B cell (primary cell): ENCODE measurements at regions of chr14 and their contacts with region 1.

Region 1: DNA sequence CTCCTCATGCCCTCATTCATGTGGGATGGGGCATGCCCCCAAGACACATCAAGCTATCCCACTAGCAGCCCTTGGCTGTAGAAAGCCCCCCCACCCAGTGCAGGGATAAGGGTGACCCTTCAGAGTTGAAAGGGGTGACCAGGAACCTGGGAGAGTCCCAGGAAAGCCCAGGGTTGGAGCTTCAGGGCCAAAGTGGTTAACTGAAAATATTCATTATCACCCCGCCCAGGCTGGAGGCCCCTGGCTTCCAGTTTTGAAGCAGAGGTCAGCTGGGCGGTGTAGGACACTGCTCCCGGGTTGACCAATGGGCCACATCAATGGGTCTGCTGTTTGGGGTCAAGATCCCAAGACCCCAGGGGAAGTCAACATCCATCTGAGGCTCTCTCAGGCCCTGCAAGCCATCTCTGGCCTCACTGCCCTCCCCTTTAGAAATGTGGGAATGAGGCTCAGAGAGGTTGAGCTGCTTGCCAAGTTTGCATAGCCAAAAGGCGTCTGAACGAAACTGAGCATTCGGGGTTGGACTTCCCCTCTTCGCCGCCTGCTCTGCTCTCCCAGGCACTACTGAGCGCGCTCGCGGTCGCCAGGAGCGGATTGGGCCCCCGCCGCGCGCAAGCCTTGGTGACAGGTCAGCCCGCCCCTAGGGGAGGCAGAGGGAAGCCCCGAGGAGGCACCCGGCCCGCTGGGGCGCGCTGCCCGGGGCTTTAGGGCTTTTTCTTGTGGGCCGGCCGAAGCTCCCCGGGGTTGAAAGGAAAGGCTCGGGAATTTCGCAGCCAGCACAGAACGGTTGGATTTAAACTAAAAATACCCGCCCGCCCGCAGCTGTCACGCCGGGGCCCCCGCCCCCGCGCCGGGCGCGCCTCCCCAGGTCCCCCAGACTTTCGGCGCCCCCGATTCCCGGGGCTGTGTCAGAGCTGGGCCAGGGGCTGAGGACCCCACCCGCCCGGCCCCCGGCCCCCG is 576 bp downstream of the SYNE3 start:
- DNase-seq: peak; percentile 95
- ATAC-seq: peak; percentile 85
- H3K4me3 ChIP-seq: peak overlapping the region; percentile 50 to 77 (median 72)
- H3K4me3 Mint-ChIP-seq: peak overlapping the region; percentile 95
- H3K27ac ChIP-seq: peak overlapping the region; percentile 77 to 79
- H3K27ac Mint-ChIP-seq: peak overlapping the region; percentile 95
- H3K4me1 ChIP-seq: peaks cover 66 to 76% of the 10 kb centered on the region in 2 donors
- H3K4me1 Mint-ChIP-seq: peaks cover 77% of the 10 kb centered on the region
- H3K27me3 ChIP-seq: no peaks in the 10 kb centered on the region
- H3K27me3 Mint-ChIP-seq: no peaks in the 10 kb centered on the region
- CTCF ChIP-seq: peak; percentile 65

Region 2: DNA sequence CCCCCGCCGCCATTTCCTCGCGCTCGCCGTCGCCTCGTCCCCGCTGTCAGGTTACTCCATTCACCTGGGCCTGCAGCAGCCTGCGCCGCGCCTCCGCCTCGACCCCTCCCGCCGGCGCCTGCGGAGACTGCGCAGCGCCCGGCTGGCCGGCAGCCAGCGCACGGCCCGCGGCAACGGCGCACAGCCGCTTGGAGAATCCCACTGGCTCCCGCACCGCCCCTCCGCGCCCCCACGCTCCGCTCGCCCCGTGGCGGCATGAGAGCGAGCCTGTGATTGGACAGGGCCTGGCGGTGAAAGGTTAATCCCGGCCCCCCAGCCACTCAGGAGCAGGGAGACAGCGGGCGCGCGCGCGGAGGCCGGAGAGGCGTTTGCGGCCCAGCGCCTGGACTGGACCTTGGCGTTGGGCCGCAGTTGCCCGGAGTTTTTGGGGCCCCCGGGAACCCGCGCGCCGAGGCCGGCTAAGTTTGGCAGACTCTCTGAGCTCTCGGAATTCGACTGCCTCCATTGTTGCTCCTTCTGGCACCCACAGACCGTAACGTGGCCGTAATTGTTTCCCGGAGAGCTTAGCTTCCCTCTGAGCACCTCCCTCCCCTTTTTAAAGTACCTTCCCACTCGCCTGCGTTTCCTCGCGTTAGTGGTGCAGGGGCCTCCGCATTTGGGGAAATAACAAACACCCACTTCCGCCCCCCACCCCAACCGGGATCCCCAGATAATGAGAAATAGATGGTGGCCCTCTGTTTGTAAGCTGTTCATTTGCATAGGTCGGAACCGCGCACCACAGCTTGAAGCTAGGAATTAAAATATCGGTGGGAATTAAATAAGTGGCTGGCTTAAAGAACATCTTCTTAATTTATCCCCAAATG is 358.3 kb before region 1 on chr14 and contains the start of gene DICER1:
- CTCF ChIA-PET with region 1: no interaction called
- POLR2A ChIA-PET with region 1: no interaction called
- intact Hi-C with region 1: loop called (anchors 5 kb)
- DNase-seq: peak; percentile 95
- ATAC-seq: peak; percentile 82
- H3K4me3 ChIP-seq: peak within 1 kb of the TSS; percentile 69 to 98 (median 84)
- H3K4me3 Mint-ChIP-seq: peak within 1 kb of the TSS; percentile 99
- H3K27ac ChIP-seq: peak within 1 kb of the TSS; percentile 94
- H3K27ac Mint-ChIP-seq: peak within 1 kb of the TSS; percentile 100
- H3K4me1 ChIP-seq: peaks cover 20 to 34% of the 10 kb centered on the region in 2 donors
- H3K4me1 Mint-ChIP-seq: peaks cover 38% of the 10 kb centered on the region
- H3K27me3 ChIP-seq: no peaks in the 10 kb centered on the region
- H3K27me3 Mint-ChIP-seq: no peaks in the 10 kb centered on the region
- CTCF ChIP-seq: no peak
- total RNA-seq, gene DICER1: 90.4 and 103 TPM in 2 replicates

Region 3: DNA sequence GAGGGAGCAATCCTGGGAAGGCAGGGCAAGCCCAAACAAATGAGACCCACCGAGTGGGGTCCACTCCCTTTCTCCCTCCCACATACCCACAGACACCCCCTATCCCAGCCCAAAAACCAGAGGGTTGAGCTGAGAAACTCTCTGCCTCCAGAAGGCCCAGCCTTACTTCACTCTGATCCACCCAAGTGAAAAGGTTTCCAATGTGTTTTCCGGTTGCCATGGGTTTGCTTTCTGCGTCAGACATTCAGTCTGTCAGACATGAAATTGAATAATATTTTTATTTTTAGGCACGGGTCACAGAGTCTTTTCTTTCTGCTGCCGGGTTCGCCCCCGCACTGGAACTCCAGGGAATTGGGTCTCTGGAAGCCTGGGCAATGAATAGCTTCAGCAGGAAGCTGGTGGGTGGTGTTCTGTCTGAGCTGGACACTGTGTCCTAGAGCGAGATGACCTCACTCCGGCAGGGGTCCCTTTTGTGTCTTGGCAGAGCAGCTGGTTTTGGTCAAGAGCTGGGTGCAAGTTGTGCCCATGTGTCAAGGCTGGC is 126.3 kb before region 1 on chr14:
- CTCF ChIA-PET with region 1: no interaction called
- POLR2A ChIA-PET with region 1: no interaction called
- intact Hi-C with region 1: no loop called
- DNase-seq: no peak
- ATAC-seq: no peak
- H3K4me3 ChIP-seq: no peak overlapping the region
- H3K4me3 Mint-ChIP-seq: no peak overlapping the region
- H3K27ac ChIP-seq: no peak overlapping the region
- H3K27ac Mint-ChIP-seq: no peak overlapping the region
- H3K4me1 ChIP-seq: peaks cover 0 to under 1% of the 10 kb centered on the region in 2 donors
- H3K4me1 Mint-ChIP-seq: peaks cover 4% of the 10 kb centered on the region
- H3K27me3 ChIP-seq: peaks cover 0 to 5% (median 2%) of the 10 kb centered on the region in 4 experiments
- H3K27me3 Mint-ChIP-seq: peaks cover 24% of the 10 kb centered on the region
- CTCF ChIP-seq: no peak

Region 4: DNA sequence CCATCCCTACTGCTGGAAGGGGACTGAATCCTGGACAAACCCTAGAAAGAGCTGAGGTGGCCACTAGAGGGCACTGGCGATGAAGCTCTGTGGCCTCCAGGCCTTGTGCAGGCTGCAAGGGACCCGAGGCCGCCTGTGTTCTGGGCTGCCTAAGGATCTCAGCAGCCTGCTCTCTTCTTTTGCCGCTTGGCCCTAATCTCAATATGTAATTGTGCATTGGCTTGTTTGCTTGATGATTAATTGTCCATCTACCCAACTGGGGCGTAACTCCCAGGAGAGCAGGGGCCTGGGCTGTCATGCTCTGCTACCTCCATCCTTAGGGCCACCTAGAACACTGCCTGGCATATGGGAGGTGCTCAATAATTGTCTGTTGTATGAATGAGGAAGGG is 73.2 kb before region 1 on chr14:
- CTCF ChIA-PET with region 1: interaction called, 101 read pairs
- POLR2A ChIA-PET with region 1: no interaction called
- intact Hi-C with region 1: loop called (anchors 2 kb)
- DNase-seq: peak; percentile 83
- ATAC-seq: peak; percentile 91
- H3K4me3 ChIP-seq: no peak overlapping the region
- H3K4me3 Mint-ChIP-seq: peak overlapping the region; percentile 0
- H3K27ac ChIP-seq: peak overlapping the region in 1 of 2 donors; percentile 55
- H3K27ac Mint-ChIP-seq: peak overlapping the region; percentile 73
- H3K4me1 ChIP-seq: peaks cover 28 to 37% of the 10 kb centered on the region in 2 donors
- H3K4me1 Mint-ChIP-seq: peaks cover 27% of the 10 kb centered on the region
- H3K27me3 ChIP-seq: no peaks in the 10 kb centered on the region
- H3K27me3 Mint-ChIP-seq: no peaks in the 10 kb centered on the region
- CTCF ChIP-seq: peak; percentile 88

Region 5: DNA sequence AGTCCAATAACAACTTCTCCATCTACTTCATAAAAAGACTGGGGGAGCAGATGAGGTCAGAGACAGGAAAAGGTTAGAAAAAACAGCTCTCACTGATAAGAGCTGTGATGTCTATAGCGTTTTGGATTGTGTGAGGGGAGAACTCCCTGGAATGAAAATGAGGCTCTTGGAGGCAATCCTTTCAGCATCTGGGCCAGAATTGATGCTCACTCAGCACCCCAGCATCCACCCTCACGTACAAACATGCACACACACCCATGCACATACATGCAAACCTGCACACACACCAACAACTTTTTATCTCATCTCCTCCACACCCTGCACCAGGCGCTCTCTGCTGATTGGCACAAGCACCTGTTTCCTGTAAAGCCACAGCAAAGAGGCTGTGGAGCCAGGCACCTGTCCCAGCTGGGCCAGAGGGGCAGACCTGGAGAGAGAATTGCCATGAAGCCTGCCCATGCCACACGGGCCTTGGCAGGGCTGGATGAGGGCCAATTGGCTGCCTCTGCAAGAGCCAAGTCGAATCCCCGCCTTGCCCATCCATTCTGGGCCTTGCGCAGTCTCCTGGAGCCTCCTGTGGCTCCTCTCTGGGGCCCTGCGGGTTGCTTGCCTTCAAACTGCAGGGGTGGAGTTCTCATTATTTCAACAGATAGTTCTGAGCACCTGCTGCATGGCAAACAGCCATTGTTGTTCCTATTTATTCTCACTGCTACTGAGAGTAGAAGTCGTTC is 52.5 kb before region 1 on chr14:
- CTCF ChIA-PET with region 1: interaction called, 16 read pairs
- POLR2A ChIA-PET with region 1: no interaction called
- intact Hi-C with region 1: loop called (anchors 2 kb)
- DNase-seq: peak; percentile 68
- ATAC-seq: peak; percentile 58
- H3K4me3 ChIP-seq: peak overlapping the region in 1 of 5 experiments; percentile 19
- H3K4me3 Mint-ChIP-seq: peak overlapping the region; percentile 69
- H3K27ac ChIP-seq: peak overlapping the region; percentile 48 to 95
- H3K27ac Mint-ChIP-seq: peak overlapping the region; percentile 87
- H3K4me1 ChIP-seq: peaks cover 53 to 54% of the 10 kb centered on the region in 2 donors
- H3K4me1 Mint-ChIP-seq: peaks cover 44% of the 10 kb centered on the region
- H3K27me3 ChIP-seq: no peaks in the 10 kb centered on the region
- H3K27me3 Mint-ChIP-seq: no peaks in the 10 kb centered on the region
- CTCF ChIP-seq: no peak

Region 6: GRCh38 chr14:95495538-95496025 is 20.3 kb before region 1 on chr14:
- CTCF ChIA-PET with region 1: interaction called, 11 read pairs
- POLR2A ChIA-PET with region 1: interaction called, 22 read pairs
- intact Hi-C with region 1: loop called (anchors 1 kb)
- DNase-seq: peak; percentile 91
- ATAC-seq: peak; percentile 92
- H3K4me3 ChIP-seq: peak overlapping the region in 3 of 5 experiments; percentile 14 to 53 (median 21)
- H3K4me3 Mint-ChIP-seq: peak overlapping the region; percentile 70
- H3K27ac ChIP-seq: peak overlapping the region; percentile 97
- H3K27ac Mint-ChIP-seq: peak overlapping the region; percentile 95
- H3K4me1 ChIP-seq: peaks cover 47 to 78% of the 10 kb centered on the region in 2 donors
- H3K4me1 Mint-ChIP-seq: peaks cover 81% of the 10 kb centered on the region
- H3K27me3 ChIP-seq: no peaks in the 10 kb centered on the region
- H3K27me3 Mint-ChIP-seq: no peaks in the 10 kb centered on the region
- CTCF ChIP-seq: no peak

Region 7: GRCh38 chr14:95534299-95535225 is 18.7 kb after region 1 on chr14 and contains the start of gene GLRX5:
- CTCF ChIA-PET with region 1: interaction called, 43 read pairs
- POLR2A ChIA-PET with region 1: interaction called, 16 read pairs
- intact Hi-C with region 1: loop called (anchors 1 kb)
- DNase-seq: peak; percentile 100
- ATAC-seq: peak; percentile 84
- H3K4me3 ChIP-seq: peak within 1 kb of the TSS; percentile 54 to 90 (median 79)
- H3K4me3 Mint-ChIP-seq: peak within 1 kb of the TSS; percentile 93
- H3K27ac ChIP-seq: peak within 1 kb of the TSS; percentile 72 to 93
- H3K27ac Mint-ChIP-seq: peak within 1 kb of the TSS; percentile 93
- H3K4me1 ChIP-seq: peaks cover 23 to 36% of the 10 kb centered on the region in 2 donors
- H3K4me1 Mint-ChIP-seq: peaks cover 55% of the 10 kb centered on the region
- H3K27me3 ChIP-seq: no peaks in the 10 kb centered on the region
- H3K27me3 Mint-ChIP-seq: no peaks in the 10 kb centered on the region
- CTCF ChIP-seq: no peak
- total RNA-seq, gene GLRX5: 17.0 and 18.4 TPM in 2 replicates